ENCODE measurements at regions of chr4 and their contacts with region 1.

Region 1: DNA sequence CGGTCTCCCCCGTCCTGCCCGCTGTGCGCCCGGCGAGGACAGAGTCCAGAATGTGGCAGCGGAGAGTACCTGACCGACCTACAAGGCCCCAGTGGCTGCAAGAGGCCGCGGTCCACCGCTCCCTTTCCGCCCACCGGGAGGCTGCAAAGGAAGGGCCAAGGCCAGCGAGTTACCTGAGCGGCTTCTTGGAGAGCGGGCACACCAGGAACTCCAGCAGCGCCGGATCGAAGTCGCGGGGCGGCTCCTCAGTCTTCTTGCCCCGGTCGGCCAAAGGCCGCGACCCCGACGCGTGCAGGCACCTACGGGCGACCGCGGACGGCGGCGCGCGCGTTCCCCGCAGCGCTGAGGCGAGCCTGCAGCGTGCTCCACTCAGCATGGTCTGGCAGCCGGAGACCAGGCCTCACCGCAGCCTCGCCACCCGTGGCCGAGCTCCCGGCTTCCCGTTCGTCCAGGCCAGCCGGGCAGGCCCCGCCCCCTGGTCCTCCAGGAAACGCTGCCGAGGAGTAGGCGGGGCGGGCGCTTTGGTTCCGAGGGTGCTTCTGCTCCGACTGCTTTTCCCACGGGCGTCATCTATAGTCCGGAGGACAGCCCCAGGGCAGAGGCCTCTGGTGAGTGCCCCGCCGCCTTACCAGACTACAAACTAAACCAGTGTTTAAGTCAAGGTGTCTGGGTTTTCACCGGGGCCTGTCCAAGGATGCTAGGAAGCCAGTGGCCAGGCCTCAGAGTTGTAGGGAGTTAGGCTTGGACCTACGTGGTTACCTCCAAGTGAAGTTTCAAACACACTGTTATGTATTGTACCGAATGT is at the start of gene PYURF:
- DNase-seq: peak; percentile 94 to 98 (median 97)
- ATAC-seq: peak; percentile 96 to 98 (median 98)
- H3K4me3 ChIP-seq: peak within 1 kb of the TSS; percentile 66 to 96 (median 90)
- H3K27ac ChIP-seq: peak within 1 kb of the TSS; percentile 60 to 94 (median 86)
- H3K4me1 ChIP-seq: peaks cover 0 to 45% (median 19%) of the 10 kb centered on the region in 12 donors
- H3K27me3 ChIP-seq: no peaks in the 10 kb centered on the region
- CTCF ChIP-seq: peak in 1 of 12 donors; percentile 5
- POLR2A ChIP-seq: peak; percentile 4 to 87
- total RNA-seq, gene PYURF: 46.3 to 63.6 (median 54.2) TPM

Region 2: GRCh38 chr4:88033309-88033708 is 490.2 kb before region 1 on chr4:
- intact Hi-C with region 1: loop called in 8 of 10 experiments (anchors 5 to 10 kb)
- DNase-seq: peak in 2 of 5 donors; percentile 25 to 28
- ATAC-seq: peak in 3 of 4 donors; percentile 48 to 62 (median 62)
- H3K4me3 ChIP-seq: no peak overlapping the region
- H3K27ac ChIP-seq: no peak overlapping the region
- H3K4me1 ChIP-seq: peaks cover 0 to 11% (median 0%) of the 10 kb centered on the region in 12 donors
- H3K27me3 ChIP-seq: no peaks in the 10 kb centered on the region
- CTCF ChIP-seq: peak; percentile 54 to 76 (median 67)
- POLR2A ChIP-seq: no peak

Region 3: DNA sequence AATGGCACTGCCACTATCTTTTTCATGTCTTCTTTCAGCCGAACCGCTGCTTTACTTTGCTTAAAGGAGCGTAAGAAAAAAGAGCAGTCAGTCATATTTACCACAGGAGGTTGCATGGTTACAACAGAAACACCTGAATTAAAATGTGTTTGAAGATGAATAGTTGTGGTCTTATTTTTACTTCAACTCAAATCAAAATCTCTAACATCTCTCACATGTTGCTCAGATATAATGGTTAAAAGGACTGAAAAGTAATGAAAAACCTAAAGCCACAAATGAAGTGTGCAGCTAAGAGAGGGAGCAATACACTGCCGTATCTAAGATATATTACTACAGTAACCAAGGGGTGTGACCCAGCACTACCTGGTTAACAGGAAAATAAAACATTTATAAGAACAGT is 506.1 kb after region 1 on chr4:
- intact Hi-C with region 1: loop called in 5 of 10 experiments (anchors 5 to 10 kb)
- DNase-seq: no peak
- ATAC-seq: no peak
- H3K4me3 ChIP-seq: no peak overlapping the region
- H3K27ac ChIP-seq: no peak overlapping the region
- H3K4me1 ChIP-seq: no peaks in the 10 kb centered on the region
- H3K27me3 ChIP-seq: no peaks in the 10 kb centered on the region
- CTCF ChIP-seq: no peak
- POLR2A ChIP-seq: no peak

Measured in heart left ventricle (tissue), 16 donors.